Prostate gland (tissue), 2 donors: ENCODE measurements at regions of chr7 and their contacts with region 1.

Region 1: GRCh38 chr7:91288208-91288824 is 24.1 kb downstream of the FZD1 start:
- DNase-seq: no peak
- H3K4me3 ChIP-seq: no peak overlapping the region
- H3K27ac ChIP-seq: no peak overlapping the region
- H3K4me1 ChIP-seq: no peaks in the 10 kb centered on the region
- H3K27me3 ChIP-seq: no peaks in the 10 kb centered on the region
- CTCF ChIP-seq: peak in 1 of 4 experiments; percentile 24
- POLR2A ChIP-seq: no peak

Region 2: DNA sequence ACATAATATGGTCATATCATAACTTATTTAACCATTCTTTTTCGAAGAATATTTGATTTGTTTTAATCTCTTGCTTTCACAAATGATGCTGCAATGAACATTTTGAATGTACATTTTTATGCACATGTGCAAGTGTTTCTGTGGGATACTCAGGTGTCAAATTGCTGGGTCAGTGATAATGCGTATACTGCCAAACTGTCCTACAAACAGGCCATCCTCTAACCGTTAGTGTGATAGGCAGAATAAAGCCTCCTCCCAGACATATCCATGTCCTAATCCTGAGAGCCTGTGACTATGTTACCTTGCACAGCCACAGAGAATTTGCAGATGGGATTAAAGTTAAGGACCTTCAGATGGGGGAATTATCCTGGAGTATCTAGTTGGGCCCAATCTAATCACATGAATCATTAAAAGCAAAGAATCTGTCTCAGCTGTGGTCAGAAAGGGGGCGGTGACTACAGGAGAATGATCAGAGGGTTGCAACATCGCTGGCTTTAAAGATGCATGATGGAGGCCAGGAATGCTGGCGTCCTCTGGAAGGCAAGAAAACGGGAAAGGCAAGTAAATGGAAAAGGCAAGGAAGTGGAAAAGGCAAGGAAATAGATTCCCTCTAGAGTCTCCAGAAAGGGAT is 22.6 kb after region 1 on chr7:
- intact Hi-C with region 1: no loop called
- DNase-seq: no peak
- H3K4me3 ChIP-seq: no peak overlapping the region
- H3K27ac ChIP-seq: no peak overlapping the region
- H3K4me1 ChIP-seq: no peaks in the 10 kb centered on the region
- H3K27me3 ChIP-seq: no peaks in the 10 kb centered on the region
- CTCF ChIP-seq: no peak
- POLR2A ChIP-seq: no peak

Region 3: GRCh38 chr7:91345449-91345848 is 57.1 kb after region 1 on chr7:
- intact Hi-C with region 1: loop called (anchors 10 kb)
- DNase-seq: no peak
- H3K4me3 ChIP-seq: no peak overlapping the region
- H3K27ac ChIP-seq: no peak overlapping the region
- H3K4me1 ChIP-seq: peaks cover 2% of the 10 kb centered on the region
- H3K27me3 ChIP-seq: no peaks in the 10 kb centered on the region
- CTCF ChIP-seq: no peak
- POLR2A ChIP-seq: no peak